Activated T-helper 1 cell treated with anti-CD3 and anti-CD28 coated beads, Interleukin-12 subunit alpha, Interleukin-12 subunit beta, Interleukin-2, Interleukin-4 antibody, amounts not matched to agents 30 ng/mL and 10 ng/mL and 1 ng/mL, durations not matched to agents 14 hours and 24 hours and 36 hours (primary cell): ENCODE measurements at regions of chr19 and their contacts with region 1.

Region 1: DNA sequence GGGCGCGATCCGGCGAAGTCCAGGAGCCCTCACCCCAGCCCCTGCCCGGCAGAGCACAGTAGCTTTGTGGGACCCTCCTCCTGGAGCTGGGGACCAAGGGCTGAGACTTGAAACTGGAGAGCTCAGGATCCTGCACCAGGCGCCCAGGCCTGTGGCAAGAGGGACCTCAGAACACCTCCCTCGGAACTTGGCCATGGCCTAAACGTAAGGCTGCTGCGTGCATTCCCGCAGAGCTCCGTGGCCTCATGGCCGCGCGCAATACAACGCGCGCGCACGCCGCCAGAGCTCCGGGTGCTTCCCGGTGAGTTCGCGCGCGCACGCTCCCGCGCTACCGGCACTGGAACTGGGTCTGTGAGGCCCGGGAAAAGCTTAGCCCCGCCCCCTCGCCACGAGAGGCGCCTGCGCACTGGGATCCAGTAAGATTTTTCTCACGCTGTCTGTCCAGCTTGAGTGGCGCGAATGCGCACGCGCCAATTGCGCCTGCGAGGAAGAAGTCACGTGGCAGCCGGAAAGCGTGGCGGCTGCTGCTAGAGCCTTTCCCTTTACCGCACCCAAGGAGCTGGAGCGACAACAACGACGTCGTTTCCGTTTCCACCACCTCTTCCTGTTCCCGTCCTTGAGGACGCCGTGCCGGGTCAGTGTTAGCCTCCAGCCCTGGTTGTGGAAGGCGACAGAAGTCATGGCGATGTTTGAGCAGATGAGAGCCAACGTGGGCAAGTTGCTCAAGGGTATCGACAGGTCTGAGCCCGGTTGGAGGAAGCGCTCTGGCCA is at the start of gene EIF3K:
- DNase-seq: peak; percentile 98
- H3K4me3 Mint-ChIP-seq: peak within 1 kb of the TSS; percentile 98
- H3K27ac Mint-ChIP-seq: peak within 1 kb of the TSS; percentile 84
- H3K4me1 Mint-ChIP-seq: peaks cover 32% of the 10 kb centered on the region
- H3K27me3 Mint-ChIP-seq: no peaks in the 10 kb centered on the region
- total RNA-seq, gene EIF3K: 309 and 326 TPM in 2 replicates

Region 2: GRCh38 chr19:37583340-37583739 is 1035.4 kb before region 1 on chr19:
- intact Hi-C with region 1: no loop called
- DNase-seq: no peak
- H3K4me3 Mint-ChIP-seq: no peak overlapping the region
- H3K27ac Mint-ChIP-seq: no peak overlapping the region
- H3K4me1 Mint-ChIP-seq: no peaks in the 10 kb centered on the region
- H3K27me3 Mint-ChIP-seq: no peaks in the 10 kb centered on the region

Region 3: GRCh38 chr19:38394488-38394887 is 224.3 kb before region 1 on chr19:
- intact Hi-C with region 1: loop called (anchors 1 kb)
- DNase-seq: peak; percentile 67
- H3K4me3 Mint-ChIP-seq: peak overlapping the region; percentile 83
- H3K27ac Mint-ChIP-seq: peak overlapping the region; percentile 83
- H3K4me1 Mint-ChIP-seq: peaks cover 29% of the 10 kb centered on the region
- H3K27me3 Mint-ChIP-seq: peaks cover 19% of the 10 kb centered on the region

Region 4: DNA sequence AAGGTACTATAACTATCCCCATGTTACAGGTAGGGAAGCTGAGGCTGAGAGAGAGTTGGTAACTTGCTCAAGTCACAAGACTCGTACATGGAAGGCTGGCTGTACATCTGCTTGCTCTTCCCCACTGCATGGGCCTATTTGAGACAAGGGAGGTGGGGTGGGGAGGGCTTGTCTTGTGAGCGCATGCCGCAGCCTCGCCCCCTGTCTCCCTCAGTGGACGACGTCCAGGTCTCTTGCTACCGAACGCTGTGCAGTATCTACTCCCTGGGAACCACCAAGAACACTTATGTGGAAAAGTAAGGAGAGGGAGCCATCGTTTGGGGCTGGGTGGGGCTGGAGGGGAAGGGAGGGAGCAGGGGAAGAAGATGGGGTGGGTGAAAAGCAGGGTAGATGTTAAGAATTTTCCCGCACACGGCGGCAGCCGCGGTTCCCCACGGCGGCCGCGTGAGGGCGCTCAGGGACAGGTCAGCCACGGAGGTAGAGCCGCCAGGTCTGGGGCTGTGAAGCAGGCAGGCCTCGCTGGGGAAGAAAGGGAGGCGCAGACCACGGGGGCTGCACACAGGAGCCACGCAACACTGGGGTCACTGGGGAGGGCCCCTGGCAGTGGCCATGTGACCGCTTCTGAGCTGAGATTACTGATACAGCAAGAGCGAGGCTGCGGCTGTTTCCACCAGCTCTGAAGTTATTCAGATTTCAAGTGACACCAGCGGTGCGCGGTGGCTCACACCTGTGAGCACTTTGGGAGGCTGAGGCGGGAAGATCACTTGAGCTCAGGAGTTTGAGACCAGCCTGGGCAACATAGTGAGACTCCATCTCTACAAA is 103.8 kb before region 1 on chr19:
- intact Hi-C with region 1: loop called (anchors 1 kb)
- DNase-seq: peak; percentile 69
- H3K4me3 Mint-ChIP-seq: no peak overlapping the region
- H3K27ac Mint-ChIP-seq: no peak overlapping the region
- H3K4me1 Mint-ChIP-seq: peaks cover 21% of the 10 kb centered on the region
- H3K27me3 Mint-ChIP-seq: peaks cover 9% of the 10 kb centered on the region

Region 5: GRCh38 chr19:38559428-38560401 is 59.1 kb before region 1 on chr19:
- intact Hi-C with region 1: loop called (anchors 2 kb)
- DNase-seq: peak; percentile 47
- H3K4me3 Mint-ChIP-seq: peak overlapping the region; percentile 38
- H3K27ac Mint-ChIP-seq: peak overlapping the region; percentile 76
- H3K4me1 Mint-ChIP-seq: peaks cover 56% of the 10 kb centered on the region
- H3K27me3 Mint-ChIP-seq: peaks cover 23% of the 10 kb centered on the region

Region 6: DNA sequence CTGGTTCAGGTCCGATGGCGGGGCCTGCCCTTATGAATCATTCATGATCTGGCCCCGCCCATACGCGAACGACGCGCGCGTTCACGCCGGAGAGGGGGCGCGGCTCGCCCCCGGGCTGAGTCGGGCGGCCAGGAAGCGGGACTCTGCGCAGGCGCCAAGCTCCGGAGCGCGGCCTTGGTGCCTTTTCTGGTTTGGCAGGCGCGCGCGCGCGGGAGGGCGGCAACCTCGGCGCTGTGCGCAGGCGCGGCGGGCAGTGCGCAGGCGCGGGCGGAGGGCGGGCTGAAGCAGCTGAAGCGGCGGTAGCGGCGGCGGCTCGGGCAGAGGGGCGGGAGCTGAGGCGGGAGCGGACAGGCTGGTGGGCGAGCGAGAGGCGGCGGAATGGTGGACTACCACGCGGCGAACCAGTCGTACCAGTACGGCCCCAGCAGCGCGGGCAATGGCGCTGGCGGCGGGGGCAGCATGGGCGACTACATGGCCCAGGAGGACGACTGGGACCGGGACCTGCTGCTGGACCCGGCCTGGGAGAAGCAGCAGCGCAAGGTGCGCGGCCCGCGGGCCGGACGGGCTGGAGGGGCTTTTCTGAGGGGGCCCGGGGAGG is 28.7 kb after region 1 on chr19 and contains the start of gene ACTN4:
- intact Hi-C with region 1: loop called (anchors 1 kb)
- DNase-seq: peak; percentile 100
- H3K4me3 Mint-ChIP-seq: peak within 1 kb of the TSS; percentile 94
- H3K27ac Mint-ChIP-seq: peak within 1 kb of the TSS; percentile 82
- H3K4me1 Mint-ChIP-seq: peaks cover 38% of the 10 kb centered on the region
- H3K27me3 Mint-ChIP-seq: no peaks in the 10 kb centered on the region
- total RNA-seq, gene ACTN4: 281 and 287 TPM in 2 replicates

Region 7: GRCh38 chr19:38899447-38900219 is 280.9 kb after region 1 on chr19 and contains the starts of genes NFKBIB and SIRT2:
- intact Hi-C with region 1: loop called (anchors 1 kb)
- DNase-seq: peak; percentile 100
- H3K4me3 Mint-ChIP-seq: peak within 1 kb of the TSS; percentile 93
- H3K27ac Mint-ChIP-seq: peak within 1 kb of the TSS; percentile 94
- H3K4me1 Mint-ChIP-seq: peaks cover 42% of the 10 kb centered on the region
- H3K27me3 Mint-ChIP-seq: no peaks in the 10 kb centered on the region
- total RNA-seq, gene NFKBIB: 98.1 and 102 TPM in 2 replicates
- total RNA-seq, gene SIRT2: 28.3 and 28.7 TPM in 2 replicates